ENCODE measurements at regions of chr10 and their contacts with region 1.

Region 1: DNA sequence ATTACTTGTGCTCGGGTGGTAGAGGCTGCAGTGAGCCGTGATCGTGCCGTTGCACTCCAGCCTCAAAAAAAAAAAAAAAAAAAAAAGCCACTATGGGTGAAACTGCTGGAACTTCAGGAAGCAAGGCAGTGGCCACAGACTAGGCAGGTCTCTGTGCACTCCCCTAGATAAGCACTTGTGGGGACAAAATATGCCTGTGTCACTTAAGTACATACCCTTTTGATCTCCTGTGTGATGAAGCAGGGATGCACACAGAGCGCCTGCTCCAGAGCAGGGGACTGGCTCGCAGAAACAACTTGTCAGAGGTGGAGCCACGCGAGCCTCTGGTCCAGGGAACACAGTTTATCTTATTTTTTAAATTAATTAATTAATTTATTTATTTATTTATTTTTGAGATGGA is 42.9 kb upstream of the PSAP start:
- DNase-seq: no peak
- H3K4me3 ChIP-seq: no peak overlapping the region
- H3K27ac ChIP-seq: no peak overlapping the region
- H3K4me1 ChIP-seq: peaks cover 7% of the 10 kb centered on the region
- H3K27me3 ChIP-seq: no peaks in the 10 kb centered on the region
- CTCF ChIP-seq: no peak

Region 2: DNA sequence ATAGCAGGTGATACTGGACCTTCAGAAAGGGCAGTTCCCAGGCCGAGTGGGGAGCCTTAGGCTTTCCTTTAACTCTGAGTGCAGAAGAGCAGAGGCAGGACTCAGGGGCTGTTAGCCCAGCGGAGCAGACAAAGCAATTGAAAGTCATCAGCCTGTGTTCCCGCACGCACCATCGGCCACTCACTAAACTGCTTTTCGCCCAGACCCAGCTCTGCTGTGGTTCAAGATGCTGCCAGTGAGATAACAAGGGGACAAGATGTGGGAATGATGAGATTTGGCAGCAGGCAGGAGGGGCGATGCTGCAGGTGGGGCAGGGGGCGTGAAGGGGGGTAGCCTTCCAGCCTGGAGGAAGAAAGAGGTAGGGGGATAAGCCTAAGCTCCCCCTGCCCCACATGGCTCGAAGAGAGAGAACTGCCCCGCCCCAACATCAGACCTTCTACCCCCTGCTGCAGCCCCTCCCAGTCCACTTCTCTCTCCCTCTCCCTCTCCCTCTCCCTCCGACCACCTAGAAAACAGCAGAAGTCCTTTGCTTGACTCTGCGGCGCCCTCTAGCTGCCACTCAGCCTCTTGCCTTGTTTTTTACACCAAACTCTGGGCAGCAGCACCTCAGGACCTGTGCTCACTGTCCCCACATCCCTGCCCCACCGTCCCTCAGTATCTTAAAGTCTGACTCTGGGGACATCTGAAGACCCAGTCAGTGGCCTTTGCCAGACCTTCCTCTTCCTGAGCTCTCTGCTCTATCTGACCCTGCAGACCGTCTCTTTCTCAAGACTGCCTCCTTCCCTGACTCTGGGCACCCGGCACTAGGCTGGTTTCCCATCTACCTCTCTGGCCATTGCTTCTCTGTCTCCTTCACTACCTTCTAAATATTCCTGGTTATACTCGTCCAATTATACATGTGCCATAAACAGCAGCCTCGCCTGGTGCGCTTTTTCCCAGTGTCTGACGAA is 284.8 kb before region 1 on chr10:
- intact Hi-C with region 1: no loop called
- DNase-seq: peak; percentile 80
- H3K4me3 ChIP-seq: no peak overlapping the region
- H3K27ac ChIP-seq: no peak overlapping the region
- H3K4me1 ChIP-seq: peaks cover 20% of the 10 kb centered on the region
- H3K27me3 ChIP-seq: no peaks in the 10 kb centered on the region
- CTCF ChIP-seq: peak; percentile 84

Region 3: GRCh38 chr10:71835671-71836595 is 58.0 kb before region 1 on chr10:
- intact Hi-C with region 1: loop called (anchors 10 kb)
- DNase-seq: peak; percentile 58
- H3K4me3 ChIP-seq: peak overlapping the region; percentile 26
- H3K27ac ChIP-seq: peak overlapping the region; percentile 84
- H3K4me1 ChIP-seq: peaks cover 100% of the 10 kb centered on the region
- H3K27me3 ChIP-seq: no peaks in the 10 kb centered on the region
- CTCF ChIP-seq: no peak